CD8-positive, alpha-beta T cell (primary cell): ENCODE measurements at regions of chr2 and their contacts with region 1.

Region 1: DNA sequence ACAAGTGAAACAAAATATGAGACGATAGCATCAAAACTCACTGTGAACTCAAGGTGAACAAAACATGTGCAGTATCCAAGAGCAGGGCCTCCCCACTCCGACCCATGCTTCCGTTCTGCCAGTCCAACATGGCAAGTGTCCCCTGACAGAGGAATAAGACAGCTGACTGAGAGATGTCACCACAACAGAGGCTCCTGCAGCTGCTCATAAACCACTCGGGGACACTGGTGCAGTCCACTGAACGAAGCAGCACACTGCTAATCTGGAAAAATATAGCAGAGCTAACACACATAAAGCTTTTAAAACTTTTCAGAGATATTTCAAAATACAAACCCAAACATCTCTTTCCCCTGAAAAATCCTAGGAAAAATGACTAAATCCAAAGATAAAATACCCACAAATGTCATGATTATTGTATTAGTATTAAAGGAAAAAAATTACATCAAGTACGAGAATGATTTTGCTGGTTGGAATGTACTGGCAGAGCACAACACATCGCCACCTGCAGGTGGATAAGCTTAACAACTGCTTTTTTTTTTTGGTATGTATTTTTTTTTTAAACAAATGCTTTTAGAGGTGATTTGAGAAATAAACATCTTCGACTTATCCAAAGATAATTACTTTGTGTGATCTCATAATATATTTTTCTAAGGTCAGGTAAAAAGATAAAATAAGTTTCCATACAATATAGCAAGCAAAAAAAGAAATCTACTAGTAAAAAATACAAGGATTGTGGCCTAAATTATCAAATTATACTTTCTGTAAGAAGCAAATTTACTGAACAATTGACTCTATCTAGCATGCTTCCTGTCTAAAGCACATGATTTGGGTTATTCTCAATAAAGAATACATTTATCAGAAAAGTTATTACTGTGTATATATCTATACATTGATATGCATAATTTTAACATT is 18.6 kb downstream of the THADA start:
- DNase-seq: peak in 4 of 9 experiments; percentile 20 to 74 (median 50)
- ATAC-seq: peak; percentile 63
- H3K4me3 ChIP-seq: no peak overlapping the region
- H3K4me3 Mint-ChIP-seq: no peak overlapping the region
- H3K27ac ChIP-seq: no peak overlapping the region
- H3K27ac Mint-ChIP-seq: no peak overlapping the region
- H3K4me1 ChIP-seq: no peaks in the 10 kb centered on the region
- H3K4me1 Mint-ChIP-seq: peaks cover 3% of the 10 kb centered on the region
- H3K27me3 ChIP-seq: no peaks in the 10 kb centered on the region
- H3K27me3 Mint-ChIP-seq: no peaks in the 10 kb centered on the region
- CTCF ChIP-seq: peak; percentile 86

Region 2: DNA sequence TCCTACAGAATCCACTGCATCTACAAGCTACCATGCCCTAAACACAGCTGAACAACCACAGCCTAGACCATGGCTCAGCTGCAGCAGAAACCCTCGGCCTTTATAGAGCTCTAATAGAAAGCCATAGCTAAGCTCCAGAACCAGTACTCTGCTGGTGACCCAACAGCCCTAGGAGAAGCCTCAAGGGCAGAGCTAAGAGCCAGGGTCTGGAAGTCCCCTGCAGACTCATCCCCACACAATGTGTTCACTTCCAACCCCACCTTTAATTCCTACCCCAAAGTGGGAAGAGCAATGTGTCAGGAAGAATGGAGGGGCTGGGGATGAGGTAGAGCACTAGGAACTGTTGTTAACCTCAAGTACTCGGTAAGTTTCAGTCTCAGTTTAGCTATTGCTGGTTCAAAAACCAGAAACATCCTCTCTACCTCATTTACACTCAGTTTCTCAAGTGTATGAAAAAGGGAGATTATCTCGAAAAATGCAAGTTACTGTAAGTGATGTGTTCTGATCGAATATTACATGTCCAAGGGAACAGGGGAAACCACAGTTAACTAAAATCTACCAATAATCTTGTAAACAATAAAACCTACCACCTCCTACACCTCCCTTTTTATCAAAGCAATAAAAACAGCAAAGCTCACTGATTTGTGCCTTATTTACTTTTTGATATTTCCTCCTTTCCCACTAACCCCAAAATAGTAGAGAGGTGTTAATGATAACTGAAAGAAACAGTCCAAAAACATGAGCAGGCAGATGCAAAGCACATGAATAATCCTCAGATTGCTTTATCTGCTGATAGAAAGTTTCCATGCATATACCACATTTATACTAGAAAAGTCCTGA is 17.6 kb before region 1 on chr2:
- CTCF ChIA-PET with region 1: interaction called, 13 read pairs
- POLR2A ChIA-PET with region 1: interaction called, 3 read pairs
- intact Hi-C with region 1: no loop called
- DNase-seq: no peak
- ATAC-seq: no peak
- H3K4me3 ChIP-seq: no peak overlapping the region
- H3K4me3 Mint-ChIP-seq: no peak overlapping the region
- H3K27ac ChIP-seq: peak overlapping the region in 1 of 2 experiments; percentile 4
- H3K27ac Mint-ChIP-seq: peak overlapping the region; percentile 69
- H3K4me1 ChIP-seq: no peaks in the 10 kb centered on the region
- H3K4me1 Mint-ChIP-seq: peaks cover 19% of the 10 kb centered on the region
- H3K27me3 ChIP-seq: no peaks in the 10 kb centered on the region
- H3K27me3 Mint-ChIP-seq: no peaks in the 10 kb centered on the region
- CTCF ChIP-seq: no peak

Region 3: DNA sequence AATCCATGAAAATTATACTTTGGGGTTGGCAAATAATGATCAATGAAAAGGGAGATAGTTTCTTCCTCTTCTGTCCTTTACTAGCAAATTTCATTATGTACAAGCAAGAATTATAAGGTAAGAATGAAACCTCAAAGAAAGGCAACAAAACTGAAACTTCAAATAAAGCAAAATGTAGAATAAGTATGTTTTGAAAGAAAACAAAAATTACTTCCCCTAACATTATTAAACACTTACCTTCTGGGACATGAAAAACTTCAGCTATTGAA is 10.8 kb before region 1 on chr2:
- CTCF ChIA-PET with region 1: interaction called, 16 read pairs
- POLR2A ChIA-PET with region 1: interaction called, 3 read pairs
- intact Hi-C with region 1: no loop called
- DNase-seq: no peak
- ATAC-seq: no peak
- H3K4me3 ChIP-seq: no peak overlapping the region
- H3K4me3 Mint-ChIP-seq: no peak overlapping the region
- H3K27ac ChIP-seq: no peak overlapping the region
- H3K27ac Mint-ChIP-seq: no peak overlapping the region
- H3K4me1 ChIP-seq: no peaks in the 10 kb centered on the region
- H3K4me1 Mint-ChIP-seq: peaks cover 21% of the 10 kb centered on the region
- H3K27me3 ChIP-seq: no peaks in the 10 kb centered on the region
- H3K27me3 Mint-ChIP-seq: no peaks in the 10 kb centered on the region
- CTCF ChIP-seq: no peak

Region 4: GRCh38 chr2:43724728-43725526 is 147.7 kb after region 1 on chr2:
- CTCF ChIA-PET with region 1: no interaction called
- POLR2A ChIA-PET with region 1: no interaction called
- intact Hi-C with region 1: no loop called
- DNase-seq: no peak
- ATAC-seq: no peak
- H3K4me3 ChIP-seq: no peak overlapping the region
- H3K4me3 Mint-ChIP-seq: no peak overlapping the region
- H3K27ac ChIP-seq: no peak overlapping the region
- H3K27ac Mint-ChIP-seq: no peak overlapping the region
- H3K4me1 ChIP-seq: no peaks in the 10 kb centered on the region
- H3K4me1 Mint-ChIP-seq: no peaks in the 10 kb centered on the region
- H3K27me3 ChIP-seq: no peaks in the 10 kb centered on the region
- H3K27me3 Mint-ChIP-seq: peaks cover 2% of the 10 kb centered on the region
- CTCF ChIP-seq: no peak